Right lobe of liver (tissue), 6 donors: ENCODE measurements at regions of chr11 and their contacts with region 1.

Region 1: DNA sequence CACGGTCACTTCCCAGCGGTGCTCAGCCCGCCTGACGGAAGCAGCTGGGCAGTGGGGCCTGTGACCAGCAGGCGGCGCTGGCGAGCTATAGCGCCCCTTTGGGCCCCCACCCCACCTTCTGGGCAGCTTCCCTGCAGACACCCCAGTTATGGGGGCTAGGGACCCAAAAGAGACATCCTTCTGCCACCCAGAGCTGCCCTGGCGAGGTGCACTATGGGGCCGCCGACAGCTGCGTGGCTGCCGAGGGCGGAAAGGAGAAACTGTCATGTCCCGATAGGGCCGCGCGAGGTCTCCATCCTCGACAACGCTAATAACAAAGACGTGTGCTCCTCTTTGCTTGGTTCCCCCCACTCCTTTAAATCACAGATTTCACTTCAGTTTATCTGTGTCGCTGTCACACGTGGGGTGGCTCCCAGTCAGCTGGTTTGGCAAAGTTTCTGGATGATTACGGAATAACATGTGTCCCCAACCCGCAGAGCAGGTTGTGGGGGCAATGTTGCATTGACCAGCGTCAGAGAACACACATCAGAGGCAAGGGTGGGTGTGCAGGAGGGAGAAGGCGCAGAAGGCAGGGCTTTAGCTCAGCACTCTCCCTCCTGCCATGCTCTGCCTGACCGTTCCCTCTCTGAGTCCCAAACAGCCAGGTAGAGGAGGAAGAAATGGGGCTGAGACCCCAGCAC is 674 bp upstream of the MYO7A start:
- DNase-seq: peak; percentile 62 to 75 (median 74)
- ATAC-seq: peak; percentile 50 to 60 (median 56)
- H3K4me3 ChIP-seq: peak overlapping the region; percentile 40 to 61 (median 60)
- H3K27ac ChIP-seq: peak overlapping the region; percentile 63 to 93 (median 88)
- H3K4me1 ChIP-seq: peaks cover 0 to 47% (median 25%) of the 10 kb centered on the region in 4 donors
- H3K27me3 ChIP-seq: no peaks in the 10 kb centered on the region
- CTCF ChIP-seq: peak; percentile 99 to 100 (median 100)
- POLR2A ChIP-seq: no peak

Region 2: GRCh38 chr11:77557554-77557953 is 430.2 kb after region 1 on chr11:
- intact Hi-C with region 1: loop called in 1 of 2 experiments (anchors 10 kb)
- DNase-seq: no peak
- ATAC-seq: no peak
- H3K4me3 ChIP-seq: no peak overlapping the region
- H3K27ac ChIP-seq: no peak overlapping the region
- H3K4me1 ChIP-seq: no peaks in the 10 kb centered on the region
- H3K27me3 ChIP-seq: no peaks in the 10 kb centered on the region
- CTCF ChIP-seq: peak in 3 of 4 donors; percentile 16 to 31 (median 29)
- POLR2A ChIP-seq: no peak